Activated CD4-positive, alpha-beta T cell treated with anti-CD3 and anti-CD28 coated beads, Interleukin-2, amount 10 ng/mL, durations not matched to agents 7 days and 5 days (primary cell): ENCODE measurements at regions of chr7 and their contacts with region 1.

Region 1: GRCh38 chr7:5665094-5666025 is 116.1 kb downstream of the RNF216 start:
- DNase-seq: peak; percentile 77
- H3K4me3 Mint-ChIP-seq: no peak overlapping the region
- H3K27ac Mint-ChIP-seq: no peak overlapping the region
- H3K4me1 Mint-ChIP-seq: peaks cover 22% of the 10 kb centered on the region
- H3K27me3 Mint-ChIP-seq: no peaks in the 10 kb centered on the region

Region 2: DNA sequence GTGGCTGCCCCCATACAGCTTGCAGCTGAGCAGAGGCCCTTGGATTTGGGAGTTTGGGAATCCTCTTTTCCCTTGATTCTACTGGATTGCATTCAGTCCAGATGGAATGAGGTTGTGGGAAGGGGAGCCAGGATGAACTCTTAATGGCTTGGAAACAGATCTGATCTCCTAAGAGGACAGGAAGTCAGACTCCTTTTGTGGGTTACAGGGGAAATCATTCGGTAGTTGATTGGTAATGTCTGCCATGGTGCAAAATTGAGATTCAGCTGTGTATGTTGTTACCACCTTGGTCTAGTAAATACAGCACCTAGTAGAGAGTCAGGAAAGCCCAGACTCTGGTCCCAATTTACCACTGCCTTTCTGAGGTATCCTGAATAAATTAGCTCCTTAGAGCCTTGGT is 97.6 kb before region 1 on chr7:
- CTCF ChIA-PET with region 1: interaction called, 12 read pairs
- POLR2A ChIA-PET with region 1: no interaction called
- DNase-seq: peak; percentile 45
- H3K4me3 Mint-ChIP-seq: no peak overlapping the region
- H3K27ac Mint-ChIP-seq: no peak overlapping the region
- H3K4me1 Mint-ChIP-seq: peaks cover 31% of the 10 kb centered on the region
- H3K27me3 Mint-ChIP-seq: peaks cover 19% of the 10 kb centered on the region

Region 3: DNA sequence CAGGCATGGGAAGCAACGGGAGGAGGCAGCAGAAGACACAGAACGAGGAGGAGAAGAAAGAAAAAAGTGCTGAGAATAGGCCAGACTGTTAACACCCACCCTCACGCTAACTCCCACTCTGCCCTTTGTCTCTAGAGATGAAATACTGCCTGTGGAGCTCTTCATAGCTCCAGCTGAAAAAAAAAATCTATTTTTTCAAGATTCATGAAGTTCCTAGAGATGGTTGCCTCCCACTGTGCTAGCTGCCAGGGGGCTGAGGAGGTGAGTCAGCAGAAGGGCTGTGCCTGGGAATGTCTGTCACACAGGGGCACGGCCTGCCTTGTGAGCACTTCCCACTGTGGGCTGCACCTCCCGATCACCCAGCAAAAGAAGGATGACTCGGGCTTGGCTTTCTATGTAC is 28.4 kb before region 1 on chr7:
- CTCF ChIA-PET with region 1: interaction called, 10 read pairs
- POLR2A ChIA-PET with region 1: no interaction called
- DNase-seq: no peak
- H3K4me3 Mint-ChIP-seq: no peak overlapping the region
- H3K27ac Mint-ChIP-seq: no peak overlapping the region
- H3K4me1 Mint-ChIP-seq: peaks cover 20% of the 10 kb centered on the region
- H3K27me3 Mint-ChIP-seq: no peaks in the 10 kb centered on the region

Region 4: DNA sequence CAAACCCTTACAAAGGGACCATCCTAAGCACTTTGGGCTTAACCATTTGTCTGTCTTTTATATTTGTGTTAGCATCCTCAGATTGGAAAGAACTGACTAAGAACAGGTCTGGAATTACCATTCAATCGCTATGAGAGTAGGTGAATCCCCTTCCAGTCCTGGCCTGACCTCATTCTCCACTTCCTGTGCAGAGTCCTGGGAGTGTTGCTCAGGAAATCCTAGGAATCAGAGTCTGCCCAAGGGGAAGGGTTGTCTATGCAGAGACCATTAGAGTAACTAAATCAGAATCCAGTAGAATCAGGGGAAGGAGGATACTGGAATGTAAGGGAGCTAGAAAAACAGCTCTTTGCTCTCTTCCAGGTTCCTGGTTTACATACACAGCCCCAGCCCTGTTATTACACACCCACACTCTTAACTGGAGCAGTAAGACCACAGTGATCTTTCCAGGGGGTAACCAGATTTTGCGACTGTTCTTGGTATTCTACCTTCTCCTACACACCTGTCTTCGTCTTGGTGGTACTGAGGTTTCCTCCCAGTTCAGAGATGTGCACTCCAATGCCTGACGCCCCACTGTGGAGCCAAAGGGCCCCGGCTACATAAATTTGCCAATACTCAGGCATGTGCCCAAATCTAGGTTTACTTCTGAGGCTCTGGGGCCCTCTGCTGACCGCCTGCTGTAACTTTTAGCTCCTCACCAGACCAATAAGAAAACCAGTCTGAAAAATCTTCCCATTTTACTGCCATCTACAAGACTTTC is 12.4 kb after region 1 on chr7:
- CTCF ChIA-PET with region 1: interaction called, 16 read pairs
- POLR2A ChIA-PET with region 1: no interaction called
- DNase-seq: peak; percentile 51
- H3K4me3 Mint-ChIP-seq: no peak overlapping the region
- H3K27ac Mint-ChIP-seq: no peak overlapping the region
- H3K4me1 Mint-ChIP-seq: peaks cover 59% of the 10 kb centered on the region
- H3K27me3 Mint-ChIP-seq: no peaks in the 10 kb centered on the region

Region 5: DNA sequence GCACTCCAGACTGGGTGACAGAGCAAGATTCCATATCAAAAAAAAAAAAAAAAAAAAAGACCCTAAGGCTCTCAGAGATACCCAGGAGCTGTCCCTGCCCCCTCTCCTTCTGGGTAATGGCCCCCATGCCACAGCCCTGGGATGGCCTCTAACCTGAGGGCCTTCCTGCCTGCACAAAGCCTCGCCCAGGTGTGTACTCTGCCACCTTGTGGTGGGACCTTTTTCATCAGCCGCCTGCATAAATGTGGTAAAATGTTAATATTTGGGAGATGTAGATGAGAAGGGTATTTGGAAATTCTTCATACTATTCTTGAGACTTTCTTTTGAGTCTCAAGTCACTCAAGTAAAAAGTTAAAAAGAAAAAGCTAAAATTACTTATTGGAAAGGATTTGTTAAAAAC is 162.4 kb after region 1 on chr7:
- CTCF ChIA-PET with region 1: no interaction called
- POLR2A ChIA-PET with region 1: no interaction called
- DNase-seq: peak; percentile 62
- H3K4me3 Mint-ChIP-seq: no peak overlapping the region
- H3K27ac Mint-ChIP-seq: peak overlapping the region; percentile 50
- H3K4me1 Mint-ChIP-seq: peaks cover 26% of the 10 kb centered on the region
- H3K27me3 Mint-ChIP-seq: no peaks in the 10 kb centered on the region